Activated B cell treated with CpG ODN at 0.5 μM for 24 hours (primary cell): ENCODE measurements at regions of chr11 and their contacts with region 1.

Region 1: GRCh38 chr11:61747192-61747966 is 5.1 kb upstream of the MYRF start:
- DNase-seq: peak; percentile 42
- ATAC-seq: peak; percentile 51
- H3K4me3 Mint-ChIP-seq: no peak overlapping the region
- H3K27ac Mint-ChIP-seq: no peak overlapping the region
- H3K4me1 Mint-ChIP-seq: peaks cover 4% of the 10 kb centered on the region
- H3K27me3 Mint-ChIP-seq: peaks cover 22% of the 10 kb centered on the region
- CTCF ChIP-seq: peak; percentile 39

Region 2: DNA sequence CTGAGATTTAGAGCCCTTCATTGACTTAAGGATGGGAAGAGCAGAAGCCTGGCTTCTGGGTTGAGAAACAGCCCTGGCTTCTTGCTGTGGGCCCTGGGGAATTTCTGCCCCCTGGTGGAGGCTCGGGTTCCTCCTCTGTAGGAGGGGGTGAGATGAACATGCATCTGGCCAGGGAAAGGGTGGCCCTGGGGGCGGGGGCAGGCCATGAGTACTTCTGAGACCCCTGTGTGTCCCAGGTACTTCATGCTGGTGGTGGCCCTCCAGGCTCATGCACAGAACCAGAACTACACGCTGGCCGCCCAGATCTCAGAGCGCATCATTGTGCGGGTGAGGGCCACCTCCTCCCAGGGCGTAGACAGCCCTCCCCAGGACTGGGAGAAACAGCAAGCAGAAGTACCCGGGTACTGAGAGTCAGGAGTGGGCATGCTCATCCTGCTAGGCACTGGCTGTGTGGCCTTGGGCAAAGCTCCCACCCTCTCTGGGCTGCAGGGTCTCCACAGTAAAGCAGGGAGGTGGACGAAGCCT is 29.2 kb after region 1 on chr11:
- CTCF ChIA-PET with region 1: no interaction called
- POLR2A ChIA-PET with region 1: no interaction called
- intact Hi-C with region 1: loop called (anchors 1 kb)
- DNase-seq: peak; percentile 50
- ATAC-seq: peak; percentile 59
- H3K4me3 Mint-ChIP-seq: peak overlapping the region; percentile 59
- H3K27ac Mint-ChIP-seq: no peak overlapping the region
- H3K4me1 Mint-ChIP-seq: peaks cover 14% of the 10 kb centered on the region
- H3K27me3 Mint-ChIP-seq: peaks cover 5% of the 10 kb centered on the region
- CTCF ChIP-seq: no peak